ENCODE measurements at regions of chr15 and their contacts with region 1.

Region 1: DNA sequence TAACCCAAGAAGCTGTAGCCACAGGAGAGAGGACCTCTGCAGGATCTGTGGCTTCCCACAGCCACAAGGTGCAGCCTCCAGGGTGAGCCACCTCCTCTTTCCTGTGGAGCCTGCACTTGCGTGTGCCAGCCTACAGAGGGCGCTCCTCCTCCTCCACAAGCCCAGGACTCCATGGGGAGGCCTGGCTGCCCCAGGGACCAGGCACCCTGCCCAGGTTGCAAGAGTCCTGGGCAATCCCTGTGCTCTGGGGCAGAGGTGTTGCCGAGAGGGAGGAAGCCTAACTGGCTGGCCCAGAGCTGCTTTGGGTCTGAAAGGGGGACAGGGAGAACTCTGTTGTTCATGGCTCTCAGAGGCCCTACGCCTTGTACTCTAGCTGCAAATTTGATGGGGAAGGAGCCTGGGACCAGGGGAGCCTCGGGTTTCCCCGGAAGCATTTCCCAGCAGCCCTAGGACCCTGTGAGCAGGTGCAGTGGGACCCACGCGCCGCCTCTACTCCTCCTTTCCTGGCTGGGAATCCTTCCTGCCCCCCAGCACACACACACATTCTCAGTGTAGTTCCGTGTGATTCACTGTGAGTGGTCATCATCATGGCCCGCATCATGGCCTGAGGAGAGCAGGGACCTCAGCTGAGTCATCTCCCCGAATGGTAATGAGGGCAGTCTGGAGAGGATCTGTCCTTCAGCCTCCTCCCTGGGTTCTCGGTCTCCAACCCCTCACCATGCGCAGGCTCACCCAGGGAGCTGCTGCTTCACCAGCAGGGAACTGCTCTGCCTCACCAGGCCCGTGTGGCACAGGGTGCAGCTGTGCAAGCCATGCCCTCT is 24.3 kb downstream of the TBC1D21 start:
- DNase-seq: peak; percentile 81
- H3K4me3 ChIP-seq: no peak overlapping the region
- H3K27ac ChIP-seq: peak overlapping the region; percentile 12 to 80; a peak in 3 of 4 replicates
- H3K4me1 ChIP-seq: peaks cover 19 to 28% of the 10 kb centered on the region in 2 experiments; a peak in 3 of 4 replicates
- H3K27me3 ChIP-seq: no peaks in the 10 kb centered on the region
- CTCF ChIP-seq: peak; percentile 96
- EP300 ChIP-seq: no peak; a peak in 1 of 4 replicates
- RAD21 ChIP-seq: peak; percentile 63

Region 2: DNA sequence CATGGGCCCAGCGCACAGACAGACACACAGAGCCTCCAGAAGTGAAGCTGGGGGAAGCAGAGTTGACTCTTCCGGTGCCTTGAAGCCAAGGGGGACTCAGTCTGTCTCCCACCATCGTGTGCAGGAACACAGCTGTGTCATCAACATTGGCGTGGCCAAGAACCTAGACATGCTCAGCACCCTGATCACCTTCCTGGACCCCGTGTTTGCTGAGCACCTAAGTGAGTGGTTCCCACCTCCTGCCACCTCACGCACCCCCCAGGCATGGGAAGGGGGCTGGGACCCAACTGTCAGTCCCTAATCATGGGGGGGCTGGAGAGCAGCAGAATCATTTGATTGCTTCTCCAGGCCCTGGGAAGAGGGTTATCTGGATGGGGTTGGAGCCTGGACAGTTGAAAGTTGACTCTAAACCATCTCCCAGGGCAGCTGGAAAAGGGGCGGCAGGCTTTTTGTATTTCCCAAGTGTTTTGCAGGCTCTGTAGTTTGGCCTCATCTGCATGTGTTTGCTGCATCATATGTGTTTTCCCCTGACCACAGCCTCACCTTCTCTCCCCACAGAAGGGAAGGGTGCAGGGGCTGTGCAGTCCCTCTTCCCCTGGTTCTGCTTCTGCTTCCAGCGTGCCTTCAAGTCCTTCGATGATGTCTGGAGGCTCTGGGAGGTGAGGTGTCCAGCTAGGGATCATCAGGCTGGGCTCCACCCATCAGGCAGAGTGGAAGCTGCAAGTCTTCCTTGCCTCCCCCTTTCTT is 11.5 kb before region 1 on chr15:
- CTCF ChIA-PET with region 1: interaction called, 12 read pairs
- POLR2A ChIA-PET with region 1: no interaction called
- DNase-seq: no peak
- H3K4me3 ChIP-seq: no peak overlapping the region
- H3K27ac ChIP-seq: no peak overlapping the region
- H3K4me1 ChIP-seq: peaks cover 0 to 12% of the 10 kb centered on the region in 2 experiments; a peak in 1 of 4 replicates
- H3K27me3 ChIP-seq: peaks cover 8% of the 10 kb centered on the region; the same call in 1 of the 2 replicates
- CTCF ChIP-seq: no peak
- EP300 ChIP-seq: no peak
- RAD21 ChIP-seq: no peak